Ovary (tissue), 10 donors: ENCODE measurements at regions of chr19 and their contacts with region 1.

Region 1: DNA sequence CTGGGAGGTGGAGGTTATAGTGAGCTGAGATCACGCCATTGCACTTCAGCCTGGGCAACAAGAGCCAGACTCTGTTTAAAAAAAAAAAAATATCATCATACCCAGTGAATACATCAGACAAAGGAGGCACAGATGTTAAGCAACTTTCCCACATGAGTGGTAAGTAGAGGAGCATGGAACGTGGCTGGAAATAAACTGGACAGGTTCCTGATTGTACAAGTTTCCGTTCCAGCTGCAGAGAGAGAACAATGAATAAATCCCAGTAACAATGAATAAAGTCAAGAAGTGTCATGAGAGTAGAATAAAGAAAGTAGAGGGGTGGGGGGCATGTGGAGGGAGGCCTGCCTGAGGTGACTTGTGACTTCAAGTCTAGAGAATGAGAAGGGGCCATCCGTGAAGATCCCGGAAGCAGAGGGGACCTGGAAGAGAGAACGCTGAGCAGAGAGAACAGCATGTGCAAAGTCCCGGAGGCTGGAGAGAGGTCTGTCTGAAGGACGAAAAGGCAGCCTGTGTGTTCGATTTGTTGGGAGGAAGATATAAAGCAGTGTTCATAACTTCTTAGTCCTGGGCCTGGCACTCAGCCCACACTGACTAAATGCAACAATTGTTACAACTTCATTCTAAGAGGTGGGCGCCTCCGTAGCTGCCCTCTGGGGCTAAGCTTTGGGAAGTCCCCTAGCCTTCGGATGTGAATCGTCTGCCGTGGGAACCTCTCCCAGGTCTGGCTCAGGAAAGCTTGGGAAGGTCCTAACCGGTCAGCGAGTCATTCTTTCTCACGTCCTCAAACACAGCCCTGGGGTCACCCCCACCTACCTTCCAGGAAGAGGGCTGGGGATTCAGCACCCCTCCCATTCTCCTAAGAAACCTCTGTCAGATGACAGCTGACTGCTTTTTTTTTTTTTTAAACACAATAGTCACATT is 15.3 kb upstream of the ARHGEF18 start:
- DNase-seq: peak in 2 of 5 donors; percentile 2 to 39
- H3K4me3 ChIP-seq: no peak overlapping the region
- H3K27ac ChIP-seq: no peak overlapping the region
- H3K4me1 ChIP-seq: no peaks in the 10 kb centered on the region
- H3K27me3 ChIP-seq: no peaks in the 10 kb centered on the region
- CTCF ChIP-seq: no peak
- EP300 ChIP-seq: no peak
- POLR2A ChIP-seq: no peak

Region 2: DNA sequence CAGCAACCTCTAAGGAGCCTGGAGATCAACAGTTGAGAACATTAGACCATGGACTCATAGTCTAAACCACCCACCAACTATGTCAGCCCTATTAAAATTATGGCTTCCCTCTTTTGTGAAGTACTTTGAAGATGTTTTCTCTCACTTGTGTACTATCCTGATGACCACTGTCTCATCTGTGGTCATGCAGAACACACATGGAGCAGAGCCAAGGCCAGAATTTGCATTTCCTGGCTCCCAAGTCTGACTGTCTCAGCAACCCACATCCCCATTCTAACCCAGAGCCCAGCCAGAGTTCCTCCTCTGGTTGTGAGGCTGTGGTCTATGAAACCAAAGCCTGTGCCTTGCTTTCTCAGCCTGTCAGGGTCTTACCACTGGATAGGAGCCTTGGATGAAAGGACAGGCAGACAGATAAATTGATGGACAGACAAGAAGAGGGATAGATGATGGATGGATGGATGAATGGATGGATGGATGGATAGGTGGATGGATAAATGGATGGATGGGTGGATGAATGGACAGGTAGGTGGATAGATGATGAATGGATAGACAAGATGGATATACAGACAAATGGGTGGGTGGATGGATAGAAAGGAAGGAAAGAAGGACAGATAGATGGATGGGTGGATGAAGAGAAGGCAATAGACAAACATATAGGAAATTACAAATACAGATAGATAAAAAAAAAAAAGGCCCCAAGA is 228.6 kb before region 1 on chr19:
- intact Hi-C with region 1: loop called in 1 of 4 experiments (anchors 2 kb)
- DNase-seq: no peak
- H3K4me3 ChIP-seq: no peak overlapping the region
- H3K27ac ChIP-seq: no peak overlapping the region
- H3K4me1 ChIP-seq: no peaks in the 10 kb centered on the region
- H3K27me3 ChIP-seq: no peaks in the 10 kb centered on the region
- CTCF ChIP-seq: no peak
- EP300 ChIP-seq: no peak
- POLR2A ChIP-seq: no peak